Ascending aorta (tissue), 2 donors: ENCODE measurements at regions of chr10 and their contacts with region 1.

Region 1: DNA sequence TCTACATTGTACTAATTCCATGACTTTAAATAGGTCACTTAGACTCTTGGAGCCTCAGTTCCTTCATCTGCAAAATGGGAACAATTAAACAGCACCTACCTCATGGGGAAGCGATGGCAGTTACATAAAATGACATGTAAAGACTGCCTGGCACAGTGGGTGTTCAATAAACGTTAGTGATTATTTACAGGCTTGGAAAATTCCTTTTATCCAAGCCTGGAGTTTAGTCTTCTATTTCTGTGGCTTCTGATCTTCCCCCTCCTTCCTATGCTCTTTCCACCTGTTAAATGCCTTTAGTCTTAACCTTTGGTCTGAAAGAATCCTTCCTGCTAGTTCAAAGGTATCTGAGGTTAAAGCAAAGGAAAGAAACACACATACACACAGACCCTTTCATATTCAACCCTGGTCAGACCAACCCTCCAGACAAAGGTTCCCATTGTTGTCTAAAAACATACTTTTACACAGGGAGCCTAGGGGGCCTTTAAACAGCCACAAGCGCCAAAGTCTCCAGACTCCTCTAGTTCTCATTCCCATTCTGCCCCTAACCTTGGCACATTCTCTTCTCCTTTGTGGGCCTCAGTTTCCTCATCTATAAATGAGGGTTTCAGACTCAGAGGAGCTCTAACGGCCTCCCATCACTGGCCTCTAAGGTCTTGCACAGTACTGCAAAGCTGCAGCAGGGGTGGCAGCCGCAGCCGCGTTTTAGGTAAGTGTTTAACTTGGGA is 21.4 kb downstream of the SORBS1 start:
- DNase-seq: no peak
- H3K4me3 ChIP-seq: peak overlapping the region in 1 of 2 donors; percentile 50
- H3K27ac ChIP-seq: peak overlapping the region; percentile 85 to 87
- H3K4me1 ChIP-seq: peaks cover 60 to 96% of the 10 kb centered on the region in 2 donors
- H3K27me3 ChIP-seq: no peaks in the 10 kb centered on the region
- CTCF ChIP-seq: no peak

Region 2: DNA sequence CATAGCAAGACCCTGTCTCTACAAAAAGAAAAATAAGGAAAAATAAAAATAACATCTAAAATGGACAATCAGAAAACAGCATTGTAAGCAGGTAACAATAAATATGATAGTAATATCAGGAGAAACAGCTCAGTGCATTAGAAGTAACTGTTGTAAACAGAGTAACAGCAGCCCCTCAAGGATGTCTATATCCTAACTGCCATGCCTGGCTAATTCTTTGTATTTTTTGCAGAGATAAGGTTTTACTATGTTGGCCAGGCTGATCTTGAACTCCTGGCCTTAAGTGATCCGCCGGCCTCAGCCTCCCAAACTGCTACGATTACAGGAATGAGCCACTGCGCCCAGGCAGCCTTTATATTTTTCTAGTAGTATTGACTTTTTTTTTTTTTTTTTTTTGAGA is 14.0 kb after region 1 on chr10:
- intact Hi-C with region 1: loop called (anchors 2 kb)
- DNase-seq: no peak
- H3K4me3 ChIP-seq: peak overlapping the region; percentile 23 to 80
- H3K27ac ChIP-seq: peak overlapping the region; percentile 11 to 53
- H3K4me1 ChIP-seq: peaks cover 5 to 34% of the 10 kb centered on the region in 2 donors
- H3K27me3 ChIP-seq: no peaks in the 10 kb centered on the region
- CTCF ChIP-seq: no peak

Region 3: DNA sequence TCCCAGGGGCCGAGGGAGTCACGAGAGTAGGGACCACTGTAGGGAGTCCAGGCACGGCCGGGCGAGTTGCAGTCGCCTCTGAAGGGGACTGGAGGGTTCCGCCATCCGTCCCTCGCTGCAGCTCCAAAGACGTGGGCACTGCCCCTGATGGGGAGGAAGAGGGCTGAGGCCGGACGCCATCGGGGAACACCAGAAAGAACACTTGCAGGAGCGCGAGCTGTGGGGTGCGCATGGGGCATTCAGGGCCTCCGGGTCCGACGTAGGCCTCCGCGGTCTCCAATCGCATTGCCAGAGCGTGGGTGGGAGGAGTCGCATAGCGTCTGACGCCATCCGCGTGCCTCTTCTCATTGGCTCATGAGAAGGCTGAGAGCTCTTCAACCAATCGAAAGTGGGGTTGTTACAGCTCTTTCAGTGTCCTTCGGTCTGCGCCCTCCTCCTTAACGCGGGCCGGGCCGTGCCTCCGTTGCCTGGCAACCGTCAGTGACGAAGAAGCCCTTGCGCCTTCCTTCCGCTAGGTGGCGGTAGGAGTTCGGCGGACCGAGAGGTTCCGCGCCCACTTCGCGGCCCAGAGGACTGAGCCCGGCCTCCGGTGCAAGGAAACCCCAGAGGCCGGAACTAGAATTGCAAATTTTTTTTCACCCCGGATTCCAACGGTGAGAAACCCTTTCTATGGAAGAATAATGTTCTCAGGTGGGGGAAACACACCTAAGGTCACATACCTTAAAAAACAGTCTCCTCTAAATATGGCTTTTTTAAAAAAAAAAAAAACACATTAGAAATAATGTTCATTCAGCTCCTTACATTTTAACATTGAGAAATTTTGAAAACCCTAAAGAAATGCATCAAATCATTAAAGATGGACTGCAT is 154.2 kb after region 1 on chr10 and contains the start of gene TCTN3:
- intact Hi-C with region 1: no loop called
- DNase-seq: peak; percentile 95 to 99
- H3K4me3 ChIP-seq: peak within 1 kb of the TSS; percentile 78 to 93
- H3K27ac ChIP-seq: peak within 1 kb of the TSS; percentile 59 to 84
- H3K4me1 ChIP-seq: peaks cover 5 to 8% of the 10 kb centered on the region in 2 donors
- H3K27me3 ChIP-seq: no peaks in the 10 kb centered on the region
- CTCF ChIP-seq: peak; percentile 97 to 99 (median 98)
- total RNA-seq, gene TCTN3: 22.1 TPM

Region 4: GRCh38 chr10:95741807-95742467 is 202.2 kb after region 1 on chr10:
- intact Hi-C with region 1: no loop called
- DNase-seq: no peak
- H3K4me3 ChIP-seq: no peak overlapping the region
- H3K27ac ChIP-seq: peak overlapping the region; percentile 31 to 34
- H3K4me1 ChIP-seq: no peaks in the 10 kb centered on the region
- H3K27me3 ChIP-seq: no peaks in the 10 kb centered on the region
- CTCF ChIP-seq: no peak